SK-N-SH (cell line): ENCODE measurements at regions of chr12 and their contacts with region 1.

Region 1: DNA sequence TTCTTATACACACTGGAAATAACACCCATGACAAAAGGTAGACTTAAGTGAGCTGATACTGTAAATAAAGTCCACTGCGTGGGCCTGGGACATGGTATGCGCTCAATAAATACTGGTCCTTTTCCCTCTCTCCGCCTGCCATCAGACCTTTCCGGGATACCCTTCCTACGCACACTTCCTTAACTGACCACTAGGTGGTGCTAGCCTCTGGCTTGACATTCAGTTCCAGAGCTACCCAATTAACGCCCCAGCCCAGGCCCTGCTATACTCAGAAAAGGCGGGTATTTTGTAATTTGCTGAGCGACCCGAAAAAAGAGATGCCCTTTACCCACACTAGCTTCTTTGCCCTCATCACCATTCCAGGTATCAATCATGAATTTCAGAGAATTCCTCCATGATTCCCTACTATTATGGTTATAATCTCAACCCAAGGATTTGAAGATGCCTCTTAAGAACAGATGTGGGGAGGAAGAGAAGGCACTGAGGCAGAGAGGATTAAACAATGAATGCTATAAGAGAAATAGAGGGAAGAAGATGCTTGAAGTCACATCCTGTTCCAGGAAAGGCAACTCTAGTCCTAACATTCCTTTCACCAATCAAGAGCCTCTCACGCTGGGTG is 3.9 kb upstream of the LRP1 start:
- DNase-seq: peak; percentile 80
- H3K4me3 ChIP-seq: no peak overlapping the region; a peak in 1 of 4 replicates
- H3K27ac ChIP-seq: no peak overlapping the region
- H3K4me1 ChIP-seq: peaks cover 0 to 9% of the 10 kb centered on the region in 2 experiments; a peak in 2 of 4 replicates
- H3K27me3 ChIP-seq: no peaks in the 10 kb centered on the region
- CTCF ChIP-seq: peak; percentile 91
- EP300 ChIP-seq: no peak
- RAD21 ChIP-seq: peak; percentile 91

Region 2: DNA sequence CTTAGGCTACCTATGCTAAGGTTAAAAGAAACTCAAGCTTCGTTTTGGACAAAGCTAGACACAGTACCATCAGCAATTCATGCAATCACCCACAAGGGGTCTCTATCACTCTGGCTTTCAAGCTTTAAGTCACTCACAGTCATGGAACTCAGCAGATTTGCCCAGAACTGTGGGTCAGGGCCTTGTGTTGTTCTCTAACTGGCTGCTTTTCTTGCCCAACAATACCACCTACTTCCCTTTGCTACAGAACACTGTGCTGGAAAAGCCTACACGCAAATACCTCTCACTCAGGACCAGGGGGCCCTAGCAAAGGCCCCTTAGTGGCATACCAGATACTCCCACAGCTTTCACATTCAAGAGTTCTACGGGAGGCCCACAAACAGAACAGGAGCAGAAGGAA is 54.8 kb before region 1 on chr12:
- CTCF ChIA-PET with region 1: interaction called, 30 read pairs
- POLR2A ChIA-PET with region 1: no interaction called
- DNase-seq: peak; percentile 59
- H3K4me3 ChIP-seq: no peak overlapping the region; a peak in 1 of 4 replicates
- H3K27ac ChIP-seq: no peak overlapping the region
- H3K4me1 ChIP-seq: peaks cover 0 to 2% of the 10 kb centered on the region in 2 experiments; a peak in 1 of 4 replicates
- H3K27me3 ChIP-seq: no peaks in the 10 kb centered on the region
- CTCF ChIP-seq: peak; percentile 84
- EP300 ChIP-seq: no peak
- RAD21 ChIP-seq: peak; percentile 96

Region 3: DNA sequence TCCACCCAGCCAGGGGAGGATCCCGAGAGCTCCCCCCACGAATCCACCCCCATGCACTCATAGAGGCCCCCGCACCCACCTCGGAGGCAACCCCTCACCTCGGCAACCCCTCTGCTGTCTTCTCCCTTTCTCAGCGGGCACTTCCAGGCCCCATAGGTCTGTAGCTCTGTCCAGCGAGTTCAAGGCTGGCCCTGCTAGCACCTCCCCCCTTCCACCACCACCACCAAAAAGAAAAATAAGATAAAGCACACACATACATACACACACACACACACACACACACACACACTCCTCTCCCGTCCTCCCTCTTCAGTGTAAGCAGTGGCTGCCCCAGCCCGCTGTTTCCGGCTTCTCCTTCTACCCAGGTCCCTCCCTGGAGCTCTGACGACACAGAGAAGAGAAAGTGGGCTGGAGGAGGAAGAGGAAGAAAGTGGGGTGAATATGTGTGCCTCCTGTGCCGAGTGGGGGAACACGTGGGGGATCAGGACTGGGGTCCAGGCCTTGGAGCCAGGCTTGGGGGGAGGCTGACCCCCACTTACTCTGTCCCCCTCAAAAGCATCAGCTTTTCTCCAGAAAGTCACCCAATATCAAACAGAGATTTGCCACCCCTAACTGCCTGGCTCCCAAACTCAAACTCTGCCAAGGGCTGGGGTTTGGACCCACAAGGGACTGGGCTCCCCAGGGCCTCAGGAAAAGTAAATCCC is 13.2 kb before region 1 on chr12 and contains the start of gene STAT6:
- CTCF ChIA-PET with region 1: interaction called, 52 read pairs
- POLR2A ChIA-PET with region 1: interaction called, 8 read pairs
- DNase-seq: no peak
- H3K4me3 ChIP-seq: peak within 1 kb of the TSS; percentile 6 to 46; a peak in 2 of 4 replicates
- H3K27ac ChIP-seq: peak within 1 kb of the TSS; percentile 3 to 28; a peak in 2 of 4 replicates
- H3K4me1 ChIP-seq: peaks cover 0 to 9% of the 10 kb centered on the region in 2 experiments; a peak in 2 of 4 replicates
- H3K27me3 ChIP-seq: no peaks in the 10 kb centered on the region
- CTCF ChIP-seq: 0 out of 2 replicates have a peak, but pooled peaks have one; percentile 9
- EP300 ChIP-seq: no peak
- RAD21 ChIP-seq: peak; percentile 23; the same call in 1 of the 2 replicates
- polyA plus RNA-seq, gene STAT6: 0.15 and 0.42 TPM in 2 replicates

Region 4: GRCh38 chr12:57145460-57146059 is 21.2 kb after region 1 on chr12:
- CTCF ChIA-PET with region 1: interaction called, 55 read pairs
- POLR2A ChIA-PET with region 1: interaction called, 5 read pairs
- DNase-seq: no peak
- H3K4me3 ChIP-seq: no peak overlapping the region
- H3K27ac ChIP-seq: no peak overlapping the region
- H3K4me1 ChIP-seq: peaks cover 10 to 23% of the 10 kb centered on the region in 2 experiments; a peak in 3 of 4 replicates
- H3K27me3 ChIP-seq: no peaks in the 10 kb centered on the region
- CTCF ChIP-seq: no peak
- EP300 ChIP-seq: no peak
- RAD21 ChIP-seq: no peak

Region 5: DNA sequence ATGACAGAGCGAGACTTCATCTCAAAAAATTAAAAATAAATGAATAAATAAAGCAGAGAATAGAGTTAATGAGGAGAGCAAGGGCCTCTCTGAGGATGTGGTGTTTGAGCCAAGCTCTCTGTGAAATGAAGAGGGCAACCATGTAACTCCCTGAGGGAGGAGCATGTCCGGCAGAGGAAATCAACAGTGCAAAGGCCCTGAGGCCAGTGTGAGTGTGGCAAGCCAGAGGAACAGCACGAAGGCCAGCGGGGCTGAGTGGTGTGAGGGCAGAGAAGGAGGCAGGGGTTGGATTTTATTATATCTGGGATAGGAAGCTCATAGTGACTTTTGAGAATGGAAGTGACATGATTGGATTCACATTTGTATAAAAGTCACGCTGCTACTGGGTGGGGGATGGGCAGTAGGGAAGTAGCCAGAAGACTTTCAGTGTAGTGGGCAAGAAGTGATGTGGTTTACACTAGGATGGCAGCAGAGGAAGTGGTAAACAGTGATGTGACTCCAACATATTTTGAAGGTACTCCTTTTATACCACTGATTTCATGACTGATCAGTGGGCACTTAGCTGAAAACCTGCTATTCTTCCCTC is 33.3 kb after region 1 on chr12:
- CTCF ChIA-PET with region 1: interaction called, 55 read pairs
- POLR2A ChIA-PET with region 1: interaction called, 10 read pairs
- DNase-seq: no peak
- H3K4me3 ChIP-seq: no peak overlapping the region
- H3K27ac ChIP-seq: peak overlapping the region in 1 of 2 experiments; percentile 62; a peak in 1 of 4 replicates
- H3K4me1 ChIP-seq: peaks cover 9 to 41% of the 10 kb centered on the region in 2 experiments; a peak in 3 of 4 replicates
- H3K27me3 ChIP-seq: no peaks in the 10 kb centered on the region
- CTCF ChIP-seq: no peak
- EP300 ChIP-seq: no peak
- RAD21 ChIP-seq: no peak

Region 6: GRCh38 chr12:57182921-57183790 is 58.8 kb after region 1 on chr12:
- CTCF ChIA-PET with region 1: interaction called, 416 read pairs
- POLR2A ChIA-PET with region 1: interaction called, 7 read pairs
- DNase-seq: peak; percentile 96
- H3K4me3 ChIP-seq: no peak overlapping the region
- H3K27ac ChIP-seq: no peak overlapping the region
- H3K4me1 ChIP-seq: no peaks in the 10 kb centered on the region
- H3K27me3 ChIP-seq: no peaks in the 10 kb centered on the region
- CTCF ChIP-seq: peak; percentile 87
- EP300 ChIP-seq: no peak
- RAD21 ChIP-seq: peak; percentile 90

Region 7: DNA sequence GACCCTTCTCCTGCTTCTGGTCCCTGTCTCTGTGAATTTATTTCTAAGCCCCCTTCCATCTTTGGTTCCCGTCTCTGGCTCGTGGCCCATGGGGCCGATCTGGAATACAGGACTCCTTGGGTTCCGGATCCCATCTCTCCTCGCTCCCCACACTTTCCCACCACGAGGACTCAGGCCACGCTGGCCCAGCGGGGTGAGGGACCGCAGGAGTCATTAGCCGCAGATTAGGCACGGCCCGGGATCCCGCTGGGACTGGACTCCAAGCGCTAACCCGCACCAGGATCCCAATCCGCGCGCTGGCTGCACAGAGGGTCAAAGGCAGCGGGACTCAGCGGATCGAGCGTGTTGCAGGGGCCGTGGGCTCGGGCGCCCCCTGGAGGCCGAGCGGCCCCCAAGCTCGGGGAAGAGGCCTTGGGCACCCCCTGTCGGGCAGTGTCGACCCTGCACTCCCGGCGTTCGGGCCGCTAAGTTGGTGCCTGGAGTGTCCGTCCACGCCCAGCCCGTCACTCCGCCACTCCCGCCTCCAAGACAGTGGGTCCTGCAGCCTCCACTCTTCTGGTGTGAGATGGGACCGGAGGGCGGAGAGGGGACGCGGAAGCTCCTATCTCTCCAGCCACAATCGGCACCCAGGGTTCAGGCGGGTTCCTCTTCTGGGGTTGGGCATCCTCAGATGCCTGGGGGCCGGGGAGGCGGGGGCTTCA is 114.6 kb after region 1 on chr12:
- CTCF ChIA-PET with region 1: interaction called, 11 read pairs
- POLR2A ChIA-PET with region 1: interaction called, 6 read pairs
- DNase-seq: peak; percentile 98
- H3K4me3 ChIP-seq: peak overlapping the region; percentile 58 to 72
- H3K27ac ChIP-seq: peak overlapping the region in 1 of 2 experiments; percentile 64; a peak in 1 of 4 replicates
- H3K4me1 ChIP-seq: peaks cover 23 to 58% of the 10 kb centered on the region in 2 experiments; a peak in 2 of 4 replicates
- H3K27me3 ChIP-seq: peaks cover 19% of the 10 kb centered on the region; the same call in 1 of the 2 replicates
- CTCF ChIP-seq: peak; percentile 99
- EP300 ChIP-seq: no peak
- RAD21 ChIP-seq: peak; percentile 80

Region 8: GRCh38 chr12:57896434-57897201 is 772.2 kb after region 1 on chr12:
- CTCF ChIA-PET with region 1: no interaction called
- POLR2A ChIA-PET with region 1: no interaction called
- DNase-seq: peak; percentile 82
- H3K4me3 ChIP-seq: peak overlapping the region; percentile 44 to 50
- H3K27ac ChIP-seq: peak overlapping the region; percentile 97 to 99
- H3K4me1 ChIP-seq: peaks cover 75 to 76% of the 10 kb centered on the region in 2 experiments
- H3K27me3 ChIP-seq: no peaks in the 10 kb centered on the region
- CTCF ChIP-seq: peak; percentile 42
- EP300 ChIP-seq: peak; percentile 14 to 72; a peak in 3 of 4 replicates
- RAD21 ChIP-seq: peak; percentile 60